AG04450 (cell line): ENCODE measurements at regions of chr11 and their contacts with region 1.

Region 1: DNA sequence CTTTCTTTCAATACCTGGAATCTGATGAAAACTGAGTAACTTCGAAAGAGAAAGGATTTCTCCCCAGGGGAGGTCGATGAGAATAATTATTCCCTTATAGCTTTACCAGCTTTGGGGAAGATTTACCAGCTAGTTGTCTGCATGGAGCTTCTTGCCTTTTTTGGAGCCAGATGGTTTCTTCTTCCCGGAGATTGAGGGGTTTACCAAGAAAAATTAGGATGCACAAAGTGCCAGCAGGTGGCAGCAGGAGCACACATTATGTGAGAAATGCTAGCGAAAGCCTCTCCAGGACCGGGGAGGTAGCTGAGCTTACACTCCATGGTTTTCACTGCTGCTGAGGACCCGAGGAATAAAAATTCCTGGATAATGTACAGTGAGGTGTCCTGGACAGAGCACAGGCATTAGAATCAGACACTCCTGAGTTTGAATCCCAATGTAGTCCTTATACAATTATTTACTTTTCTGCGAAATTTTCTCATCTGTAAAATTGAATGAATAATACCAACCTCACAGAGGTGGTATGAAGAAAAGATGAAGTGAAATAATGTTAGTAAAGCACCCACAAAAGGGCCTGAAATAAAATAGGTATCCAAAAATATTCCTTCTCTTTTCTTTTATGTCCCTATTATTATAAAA is 46.0 kb upstream of the PARVA start:
- DNase-seq: peak; percentile 71
- H3K4me3 ChIP-seq: no peak overlapping the region
- H3K27ac ChIP-seq: no peak overlapping the region
- H3K27me3 ChIP-seq: no peaks in the 10 kb centered on the region
- CTCF ChIP-seq: peak; percentile 83

Region 2: DNA sequence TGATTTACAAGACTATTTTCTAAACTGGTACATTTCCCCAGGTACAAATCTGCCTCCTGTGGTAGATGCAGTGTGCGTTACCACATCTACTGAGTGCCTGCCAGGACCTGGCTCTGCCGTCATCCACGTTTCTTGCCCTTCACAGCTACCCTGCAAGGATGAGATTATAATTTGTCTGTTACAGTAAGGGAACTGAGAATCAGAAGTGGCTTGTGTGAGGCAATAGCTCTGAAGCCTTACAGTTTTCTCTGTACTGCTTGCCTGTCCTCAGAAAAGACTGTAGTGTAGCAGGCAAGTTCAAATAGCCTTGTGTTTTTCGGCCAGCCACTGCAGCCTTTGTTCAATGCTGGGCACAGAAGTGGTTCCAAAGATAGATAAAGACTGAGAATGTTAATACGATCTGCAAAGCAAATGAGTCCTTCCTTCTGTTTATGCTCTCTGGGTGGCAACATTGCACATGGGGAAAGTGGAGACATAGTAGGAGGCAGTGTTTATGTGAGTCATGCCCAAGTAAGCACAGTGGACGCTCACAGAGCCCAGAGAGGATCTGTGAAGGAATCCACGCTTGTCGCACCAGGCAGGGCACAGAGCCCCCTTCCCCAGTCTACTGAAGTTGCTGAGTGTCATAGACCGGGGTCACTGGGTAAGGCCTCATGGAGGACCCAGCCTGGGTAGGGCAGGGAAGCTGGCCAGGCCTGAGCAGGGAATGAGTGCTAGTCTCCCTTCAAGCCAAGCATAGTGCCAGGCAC is 171.8 kb before region 1 on chr11:
- CTCF ChIA-PET with region 1: no interaction called
- POLR2A ChIA-PET with region 1: no interaction called
- DNase-seq: peak; percentile 88
- H3K4me3 ChIP-seq: peak overlapping the region; percentile 29
- H3K27ac ChIP-seq: peak overlapping the region; percentile 80
- H3K27me3 ChIP-seq: no peaks in the 10 kb centered on the region
- CTCF ChIP-seq: 0 out of 2 replicates have a peak, but pooled peaks have one; percentile 19

Region 3: GRCh38 chr11:12288212-12288930 is 43.0 kb before region 1 on chr11:
- CTCF ChIA-PET with region 1: interaction called, 56 read pairs
- POLR2A ChIA-PET with region 1: interaction called, 3 read pairs
- DNase-seq: peak; percentile 87
- H3K4me3 ChIP-seq: peak overlapping the region; percentile 10; the same call in 1 of the 2 replicates
- H3K27ac ChIP-seq: peak overlapping the region; percentile 99
- H3K27me3 ChIP-seq: no peaks in the 10 kb centered on the region
- CTCF ChIP-seq: peak; percentile 99

Region 4: GRCh38 chr11:12318791-12319438 is 12.4 kb before region 1 on chr11:
- CTCF ChIA-PET with region 1: interaction called, 31 read pairs
- POLR2A ChIA-PET with region 1: interaction called, 4 read pairs
- DNase-seq: peak; percentile 75
- H3K4me3 ChIP-seq: no peak overlapping the region
- H3K27ac ChIP-seq: peak overlapping the region; percentile 52
- H3K27me3 ChIP-seq: no peaks in the 10 kb centered on the region
- CTCF ChIP-seq: no peak

Region 5: DNA sequence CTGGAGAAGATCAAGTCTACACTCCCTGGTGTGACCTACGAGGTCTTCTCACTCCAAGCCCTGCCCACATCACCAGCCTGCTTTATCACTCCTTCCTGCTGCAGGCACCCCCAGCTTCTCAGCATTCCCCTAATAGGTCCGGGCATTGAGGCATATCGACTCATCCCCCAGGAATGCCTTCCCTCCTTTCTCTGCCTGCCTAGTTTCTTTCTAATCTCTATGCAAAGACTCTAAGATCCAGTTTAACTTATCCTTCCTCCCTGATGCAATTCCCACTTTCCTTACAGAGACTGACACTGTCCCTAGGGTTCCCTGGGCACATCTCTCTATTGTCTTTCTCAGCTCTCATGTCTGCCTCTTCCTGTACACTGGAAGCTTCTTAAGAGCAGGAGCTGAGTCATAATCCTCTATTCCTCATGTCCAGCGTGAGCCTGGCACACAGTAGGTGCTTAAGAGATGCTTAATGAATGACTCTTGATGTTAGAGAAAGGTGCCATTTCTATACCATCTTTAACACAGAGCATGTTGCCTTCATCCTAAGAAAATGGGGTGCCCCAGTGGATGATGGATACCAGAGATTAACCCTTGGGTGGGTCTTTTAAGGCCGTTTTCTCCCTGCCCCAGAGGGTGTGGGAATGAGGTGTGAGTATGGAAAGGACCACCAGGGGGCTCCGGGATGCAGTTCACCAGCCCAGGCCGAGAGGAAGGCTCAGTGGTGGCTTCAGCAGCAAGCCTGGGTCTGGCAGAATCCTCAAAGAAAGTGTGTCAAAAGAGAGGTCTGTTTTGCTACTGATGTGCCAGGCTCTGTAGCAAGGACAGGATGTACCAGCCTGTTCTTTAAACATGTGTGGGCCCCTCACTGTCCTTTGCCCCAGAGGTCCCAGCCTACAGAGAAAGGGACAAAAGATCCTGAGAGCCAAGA is 80.7 kb after region 1 on chr11:
- CTCF ChIA-PET with region 1: interaction called, 25 read pairs
- POLR2A ChIA-PET with region 1: interaction called, 3 read pairs
- DNase-seq: peak; percentile 85
- H3K4me3 ChIP-seq: no peak overlapping the region
- H3K27ac ChIP-seq: peak overlapping the region; percentile 97
- H3K27me3 ChIP-seq: no peaks in the 10 kb centered on the region
- CTCF ChIP-seq: peak; percentile 85

Region 6: DNA sequence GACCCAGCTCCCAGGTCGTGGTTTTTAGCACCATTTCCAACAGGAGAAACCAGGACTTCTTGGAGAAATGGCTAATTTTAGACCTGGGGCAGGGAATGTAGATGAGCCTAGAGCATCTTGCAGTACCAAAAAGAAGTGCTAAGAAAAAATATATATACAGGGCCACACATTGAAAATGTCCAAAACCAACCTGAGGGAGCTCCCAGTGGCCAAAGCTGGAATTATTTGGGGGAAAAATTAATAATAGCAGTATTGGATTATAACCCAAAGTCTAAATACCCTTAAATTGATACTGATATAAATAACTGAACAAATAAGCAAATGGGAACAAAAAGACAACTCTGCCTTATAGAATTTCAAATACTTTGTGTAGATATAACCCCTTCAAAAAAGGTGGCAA is 154.0 kb after region 1 on chr11:
- CTCF ChIA-PET with region 1: interaction called, 23 read pairs
- POLR2A ChIA-PET with region 1: no interaction called
- DNase-seq: no peak
- H3K4me3 ChIP-seq: no peak overlapping the region
- H3K27ac ChIP-seq: no peak overlapping the region
- H3K27me3 ChIP-seq: no peaks in the 10 kb centered on the region
- CTCF ChIP-seq: peak; percentile 51

Region 7: DNA sequence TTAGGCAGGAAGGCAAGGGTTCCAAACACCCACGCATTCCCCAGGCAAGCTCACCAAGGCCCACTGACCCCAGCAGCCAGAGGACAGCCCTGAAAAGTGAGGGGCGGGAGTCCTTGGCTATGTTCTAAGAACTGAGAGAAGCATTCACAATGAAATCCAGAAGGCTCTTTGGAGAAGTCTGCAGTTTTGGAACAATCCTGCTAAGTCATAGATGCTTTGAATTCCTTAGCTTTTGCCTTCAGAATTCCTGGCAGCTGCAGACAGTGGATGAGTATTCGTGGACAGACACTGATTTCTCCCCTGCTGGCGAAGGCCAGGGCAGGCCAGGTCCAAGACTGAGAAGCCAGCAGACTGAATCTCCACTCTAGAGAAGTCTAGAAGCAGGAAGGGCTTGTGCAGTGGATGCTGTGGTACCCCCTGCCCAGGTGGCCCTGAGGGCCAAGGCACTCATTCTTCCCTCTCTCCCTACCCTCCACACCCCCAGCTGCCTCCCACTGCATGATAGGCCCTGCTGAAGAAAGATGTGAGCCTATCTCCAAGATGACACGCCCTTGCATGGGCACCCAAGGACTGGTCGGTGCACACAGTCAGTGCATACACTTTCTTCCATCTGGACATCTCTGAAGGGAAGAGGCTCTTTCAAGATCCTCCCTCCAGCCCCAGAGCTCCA is 209.7 kb after region 1 on chr11:
- CTCF ChIA-PET with region 1: interaction called, 11 read pairs
- POLR2A ChIA-PET with region 1: interaction called, 4 read pairs
- DNase-seq: peak; percentile 87
- H3K4me3 ChIP-seq: no peak overlapping the region; the same call in 1 of the 2 replicates
- H3K27ac ChIP-seq: peak overlapping the region; percentile 99
- H3K27me3 ChIP-seq: no peaks in the 10 kb centered on the region
- CTCF ChIP-seq: peak; percentile 65

Region 8: DNA sequence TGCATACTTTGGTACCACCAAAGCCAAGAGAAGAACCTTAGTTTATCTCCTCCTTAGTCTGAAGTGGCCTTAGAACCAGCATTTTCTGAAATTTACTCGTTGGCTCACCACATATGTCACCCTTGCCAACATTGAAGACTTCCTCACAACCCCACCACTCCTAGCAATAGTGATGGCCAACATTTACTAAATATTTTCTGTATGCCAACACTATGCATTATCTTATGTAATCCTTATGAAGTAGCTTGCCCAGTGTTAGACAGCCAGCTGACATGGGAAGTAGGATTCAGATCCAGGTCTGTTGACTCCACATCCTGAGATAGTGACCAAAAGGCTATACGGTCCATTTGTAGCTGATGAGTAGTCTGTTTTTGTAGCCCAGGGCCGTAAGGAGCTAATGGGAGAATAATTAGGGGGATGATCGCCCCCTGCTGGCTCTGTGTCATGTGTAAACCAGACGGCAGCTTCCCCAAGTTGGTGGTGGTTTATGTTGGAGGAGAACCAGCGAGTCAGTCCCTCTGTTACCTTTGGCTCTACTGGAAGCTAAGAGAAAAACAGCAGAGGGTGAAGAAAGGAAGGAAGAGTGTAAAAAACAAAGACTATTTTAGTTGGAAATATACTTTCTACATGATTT is 557.3 kb after region 1 on chr11:
- CTCF ChIA-PET with region 1: interaction called, 29 read pairs
- POLR2A ChIA-PET with region 1: interaction called, 7 read pairs
- DNase-seq: peak; percentile 81
- H3K4me3 ChIP-seq: no peak overlapping the region
- H3K27ac ChIP-seq: peak overlapping the region; percentile 74
- H3K27me3 ChIP-seq: no peaks in the 10 kb centered on the region
- CTCF ChIP-seq: peak; percentile 80